Activated CD4-positive, alpha-beta memory T cell treated with anti-CD3 and anti-CD28 coated beads for 36 hours (primary cell): ENCODE measurements at regions of chr2 and their contacts with region 1.

Region 1: GRCh38 chr2:233267516-233268245 is 16.2 kb downstream of the ATG16L1 start:
- DNase-seq: peak; percentile 88
- H3K4me3 Mint-ChIP-seq: peak overlapping the region; percentile 66
- H3K27ac Mint-ChIP-seq: peak overlapping the region; percentile 94
- H3K4me1 Mint-ChIP-seq: peaks cover 63% of the 10 kb centered on the region
- H3K27me3 Mint-ChIP-seq: no peaks in the 10 kb centered on the region

Region 2: GRCh38 chr2:233084488-233084887 is 183.2 kb before region 1 on chr2:
- CTCF ChIA-PET with region 1: no interaction called
- POLR2A ChIA-PET with region 1: no interaction called
- intact Hi-C with region 1: loop called (anchors 2 kb)
- DNase-seq: peak; percentile 83
- H3K4me3 Mint-ChIP-seq: peak overlapping the region; percentile 70
- H3K27ac Mint-ChIP-seq: peak overlapping the region; percentile 98
- H3K4me1 Mint-ChIP-seq: peaks cover 84% of the 10 kb centered on the region
- H3K27me3 Mint-ChIP-seq: no peaks in the 10 kb centered on the region

Region 3: DNA sequence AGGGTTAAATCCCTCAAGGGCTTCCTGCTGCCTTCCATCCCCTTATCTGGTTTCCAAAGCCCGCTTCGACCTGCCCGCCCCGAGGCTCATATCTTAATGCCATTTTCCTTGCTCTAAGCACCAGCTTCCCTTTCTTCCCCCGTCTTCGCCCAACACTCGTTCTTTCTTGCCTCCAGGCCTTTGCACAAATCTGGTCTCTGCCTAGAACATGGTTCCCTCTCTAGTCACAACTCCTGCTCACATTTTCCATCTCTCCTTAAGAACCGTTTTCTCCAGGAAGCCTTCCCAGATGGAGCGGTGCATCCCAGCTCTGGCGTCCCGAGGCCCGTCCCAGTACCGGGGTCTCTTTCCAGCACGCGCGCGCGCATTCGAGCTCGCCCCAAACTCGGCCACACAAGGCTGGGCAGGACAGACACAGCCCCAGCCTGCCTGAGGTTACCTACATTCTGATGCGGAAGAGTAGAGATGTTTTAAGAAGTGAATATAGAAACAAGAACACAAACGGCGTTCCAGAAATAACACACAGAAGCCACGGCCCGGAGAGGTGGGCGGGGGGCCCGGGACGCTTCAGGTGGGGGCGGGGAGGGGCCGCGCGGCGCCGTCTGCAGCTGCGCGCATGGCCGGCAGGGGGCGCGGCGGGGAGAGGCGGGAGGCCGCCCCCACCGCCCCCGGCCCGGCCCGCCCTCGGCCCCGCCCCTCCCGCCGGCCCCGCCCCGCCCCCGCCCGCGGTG is 86.3 kb after region 1 on chr2 and contains the start of gene DGKD:
- CTCF ChIA-PET with region 1: interaction called, 3 read pairs
- POLR2A ChIA-PET with region 1: interaction called, 7 read pairs
- intact Hi-C with region 1: loop called (anchors 5 kb)
- DNase-seq: peak; percentile 84
- H3K4me3 Mint-ChIP-seq: peak within 1 kb of the TSS; percentile 83
- H3K27ac Mint-ChIP-seq: peak within 1 kb of the TSS; percentile 80
- H3K4me1 Mint-ChIP-seq: peaks cover 57% of the 10 kb centered on the region
- H3K27me3 Mint-ChIP-seq: no peaks in the 10 kb centered on the region
- total RNA-seq, gene DGKD: 44.2 to 46.4 TPM

Region 4: DNA sequence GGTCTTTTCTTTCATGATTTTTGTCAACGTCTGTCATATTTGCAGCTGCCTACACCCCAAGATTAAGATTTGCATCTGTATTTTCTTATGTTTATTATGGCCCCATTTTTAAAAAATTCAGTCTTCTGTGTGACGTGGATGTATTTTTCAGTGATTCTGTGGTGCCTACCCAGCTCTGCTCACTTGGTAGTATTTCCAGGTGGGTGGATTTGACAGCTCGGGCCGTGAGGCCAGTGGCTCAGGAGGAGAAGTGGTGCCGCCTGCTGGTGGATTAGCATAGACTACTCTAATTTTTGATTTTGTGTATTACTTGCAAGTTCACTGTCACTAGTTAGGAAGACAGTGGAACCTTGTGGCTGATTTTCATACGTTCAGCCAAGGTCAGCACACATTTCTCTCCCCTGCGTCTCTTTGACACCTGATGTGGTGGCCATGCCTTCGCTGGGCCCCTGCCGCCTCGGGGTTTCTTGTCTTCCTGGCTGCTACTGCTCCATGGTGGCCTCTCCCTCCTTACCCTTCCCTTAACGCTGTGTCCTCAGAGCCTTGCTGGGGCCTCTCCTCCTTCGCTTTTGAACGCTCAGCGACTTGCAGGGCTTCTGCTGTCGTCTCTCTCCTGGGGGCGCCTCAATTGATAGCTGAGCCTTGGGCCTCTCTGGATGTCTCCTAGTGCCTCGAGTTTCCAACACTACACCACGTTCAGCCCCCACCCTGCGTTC is 175.9 kb after region 1 on chr2:
- CTCF ChIA-PET with region 1: interaction called, 11 read pairs
- POLR2A ChIA-PET with region 1: no interaction called
- intact Hi-C with region 1: loop called (anchors 5 kb)
- DNase-seq: peak; percentile 88
- H3K4me3 Mint-ChIP-seq: no peak overlapping the region
- H3K27ac Mint-ChIP-seq: no peak overlapping the region
- H3K4me1 Mint-ChIP-seq: peaks cover 9% of the 10 kb centered on the region
- H3K27me3 Mint-ChIP-seq: no peaks in the 10 kb centered on the region